H1 (cell line): ENCODE measurements at regions of chr22 and their contacts with region 1.

Region 1: DNA sequence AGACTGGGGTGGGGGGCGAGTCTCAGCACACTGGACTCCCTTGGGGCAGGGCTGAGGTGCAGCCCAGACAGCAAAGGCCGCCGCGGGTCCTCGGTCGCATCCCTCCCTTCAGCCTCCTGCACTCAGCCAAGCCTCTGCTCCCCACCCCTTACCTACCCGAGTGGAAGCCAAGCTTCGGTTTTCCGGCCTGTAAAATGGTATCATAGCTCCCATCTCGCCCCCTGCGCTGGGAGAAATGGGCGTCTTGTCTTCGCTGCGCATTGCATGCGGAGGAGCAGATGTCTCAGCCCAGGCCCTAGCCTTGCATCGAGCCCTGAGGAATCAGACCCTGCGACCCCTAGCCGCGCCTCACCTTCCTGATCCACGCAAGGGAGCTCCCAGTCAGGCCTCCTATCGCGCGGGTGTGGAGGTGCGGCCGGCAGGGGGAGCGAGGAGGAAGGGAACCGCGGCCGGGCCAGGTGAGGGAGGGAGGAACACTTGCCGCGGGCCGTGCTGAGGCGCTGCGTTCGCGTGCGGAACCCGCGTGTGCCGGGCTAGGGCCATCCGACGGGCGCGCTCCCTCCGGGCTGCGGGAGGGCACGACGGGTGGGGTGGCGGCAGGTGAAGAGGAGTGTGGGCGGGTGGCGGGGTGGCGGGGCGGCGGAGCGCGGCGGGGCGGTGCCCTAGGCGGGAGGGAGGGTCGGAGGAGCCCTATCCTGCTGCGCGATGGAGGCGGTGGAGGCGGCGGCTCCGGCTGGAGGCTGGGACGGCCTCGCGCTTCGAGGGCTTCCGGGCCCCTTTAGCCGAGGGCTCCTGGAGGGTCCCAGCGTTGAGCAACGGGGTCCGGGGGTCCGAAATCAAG is 4.1 kb upstream of the TBX1 start:
- DNase-seq: peak in 1 of 2 experiments; percentile 78
- H3K4me3 ChIP-seq: peak overlapping the region in 3 of 4 experiments; percentile 4 to 56 (median 10); a peak in 4 of 8 replicates
- H3K27ac ChIP-seq: no peak overlapping the region
- H3K4me1 ChIP-seq: peaks cover 0 to 38% (median 13%) of the 10 kb centered on the region in 4 experiments; a peak in 5 of 7 replicates
- H3K27me3 ChIP-seq: peaks cover 76 to 92% (median 85%) of the 10 kb centered on the region in 4 experiments
- CTCF ChIP-seq: peak in 2 of 3 experiments; percentile 38 to 39; a peak in 3 of 4 replicates
- EP300 ChIP-seq: no peak
- POLR2A ChIP-seq: no peak
- RAD21 ChIP-seq: peak; percentile 18 to 24; a peak in 2 of 4 replicates

Region 2: DNA sequence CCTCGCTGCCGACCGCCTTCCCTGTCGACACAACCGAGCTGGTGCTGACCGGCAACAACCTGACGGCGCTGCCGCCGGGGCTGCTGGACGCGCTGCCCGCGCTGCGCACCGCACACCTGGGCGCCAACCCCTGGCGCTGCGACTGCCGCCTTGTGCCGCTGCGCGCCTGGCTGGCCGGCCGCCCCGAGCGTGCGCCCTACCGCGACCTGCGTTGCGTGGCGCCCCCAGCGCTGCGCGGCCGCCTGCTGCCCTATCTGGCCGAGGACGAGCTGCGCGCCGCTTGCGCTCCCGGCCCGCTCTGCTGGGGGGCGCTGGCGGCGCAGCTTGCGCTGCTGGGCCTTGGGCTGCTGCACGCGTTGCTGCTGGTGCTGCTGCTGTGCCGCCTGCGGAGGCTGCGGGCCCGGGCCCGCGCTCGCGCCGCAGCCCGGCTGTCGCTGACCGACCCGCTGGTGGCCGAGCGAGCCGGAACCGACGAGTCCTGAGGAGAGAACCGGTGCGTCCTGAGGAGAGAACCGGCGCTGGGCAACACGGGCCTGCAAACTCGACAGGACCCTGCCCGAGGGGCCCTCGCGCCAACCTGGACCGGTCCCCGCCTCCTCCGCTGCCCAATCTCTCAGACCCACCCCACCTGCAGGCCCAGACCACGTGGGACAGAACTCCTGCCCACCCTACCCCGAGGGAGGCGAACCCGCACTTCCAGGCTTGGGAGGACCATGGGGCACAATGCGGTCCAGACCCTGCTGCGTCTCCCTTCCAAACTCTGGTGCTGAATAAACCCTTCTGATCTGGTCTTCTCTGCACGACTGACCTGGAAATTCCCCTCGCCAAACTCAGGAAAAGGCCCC is 32.3 kb before region 1 on chr22:
- CTCF ChIA-PET with region 1: interaction called, 168 read pairs
- POLR2A ChIA-PET with region 1: interaction called, 3 read pairs
- DNase-seq: peak in 1 of 2 experiments; percentile 79
- H3K4me3 ChIP-seq: peak overlapping the region in 3 of 4 experiments; percentile 25 to 55 (median 32); a peak in 5 of 8 replicates
- H3K27ac ChIP-seq: no peak overlapping the region
- H3K4me1 ChIP-seq: peaks cover 0 to 33% (median 20%) of the 10 kb centered on the region in 4 experiments; a peak in 6 of 7 replicates
- H3K27me3 ChIP-seq: peaks cover 80 to 100% (median 97%) of the 10 kb centered on the region in 4 experiments
- CTCF ChIP-seq: peak; percentile 59 to 89 (median 76)
- EP300 ChIP-seq: no peak
- POLR2A ChIP-seq: no peak
- RAD21 ChIP-seq: peak; percentile 47 to 77

Region 3: DNA sequence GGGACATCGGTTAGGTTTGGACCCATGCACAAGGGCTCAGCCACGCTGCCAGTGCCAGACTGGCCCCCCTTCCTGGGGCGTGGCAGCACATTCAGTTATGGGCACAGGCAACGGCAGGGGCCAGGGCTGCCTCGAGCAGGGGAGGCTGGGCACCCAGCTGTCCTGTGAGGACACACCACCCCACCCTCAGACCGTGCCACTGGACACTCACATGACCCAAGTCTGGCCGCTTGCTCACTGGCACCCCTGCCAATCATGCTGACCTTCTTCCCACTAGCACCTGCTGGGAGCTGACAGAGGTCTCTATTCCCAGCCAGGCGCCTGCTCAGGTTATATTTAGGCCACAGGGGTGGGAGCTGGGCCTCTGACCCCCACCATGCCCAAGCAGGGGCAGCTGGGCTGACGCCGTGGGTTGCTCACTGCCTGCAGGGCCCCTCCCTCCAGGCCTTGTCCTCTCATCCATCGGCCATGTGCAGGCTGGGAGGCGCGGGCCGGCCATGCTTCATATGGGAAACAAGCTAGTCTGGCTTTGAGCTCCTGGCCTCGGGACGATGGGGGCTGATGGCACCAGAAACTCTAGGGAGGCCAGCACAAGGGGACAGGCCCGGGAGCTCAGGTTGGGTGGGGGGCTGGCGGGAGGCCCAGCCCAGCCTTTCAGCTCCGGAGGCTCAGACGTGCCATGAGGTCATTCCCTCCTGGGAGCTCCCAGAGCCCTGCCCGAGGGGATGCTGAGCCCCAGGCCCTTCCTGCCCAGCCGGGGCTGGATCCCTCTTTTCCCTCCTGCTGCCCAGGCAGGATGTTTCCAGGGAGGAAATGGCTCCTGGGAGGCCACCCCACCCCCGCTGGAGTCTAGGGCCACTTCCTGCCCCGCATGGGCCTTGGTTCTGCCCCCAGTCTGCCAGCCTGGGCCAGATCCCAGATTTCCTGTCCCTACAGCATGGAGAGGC is 11.1 kb before region 1 on chr22:
- CTCF ChIA-PET with region 1: interaction called, 17 read pairs
- POLR2A ChIA-PET with region 1: interaction called, 4 read pairs
- DNase-seq: no peak
- H3K4me3 ChIP-seq: no peak overlapping the region
- H3K27ac ChIP-seq: no peak overlapping the region
- H3K4me1 ChIP-seq: peaks cover 0 to 10% (median under 1%) of the 10 kb centered on the region in 4 experiments; a peak in 2 of 7 replicates
- H3K27me3 ChIP-seq: peaks cover 0 to 2% (median 0%) of the 10 kb centered on the region in 4 experiments; a peak in 4 of 7 replicates
- CTCF ChIP-seq: no peak
- EP300 ChIP-seq: no peak
- POLR2A ChIP-seq: no peak
- RAD21 ChIP-seq: no peak

Region 4: DNA sequence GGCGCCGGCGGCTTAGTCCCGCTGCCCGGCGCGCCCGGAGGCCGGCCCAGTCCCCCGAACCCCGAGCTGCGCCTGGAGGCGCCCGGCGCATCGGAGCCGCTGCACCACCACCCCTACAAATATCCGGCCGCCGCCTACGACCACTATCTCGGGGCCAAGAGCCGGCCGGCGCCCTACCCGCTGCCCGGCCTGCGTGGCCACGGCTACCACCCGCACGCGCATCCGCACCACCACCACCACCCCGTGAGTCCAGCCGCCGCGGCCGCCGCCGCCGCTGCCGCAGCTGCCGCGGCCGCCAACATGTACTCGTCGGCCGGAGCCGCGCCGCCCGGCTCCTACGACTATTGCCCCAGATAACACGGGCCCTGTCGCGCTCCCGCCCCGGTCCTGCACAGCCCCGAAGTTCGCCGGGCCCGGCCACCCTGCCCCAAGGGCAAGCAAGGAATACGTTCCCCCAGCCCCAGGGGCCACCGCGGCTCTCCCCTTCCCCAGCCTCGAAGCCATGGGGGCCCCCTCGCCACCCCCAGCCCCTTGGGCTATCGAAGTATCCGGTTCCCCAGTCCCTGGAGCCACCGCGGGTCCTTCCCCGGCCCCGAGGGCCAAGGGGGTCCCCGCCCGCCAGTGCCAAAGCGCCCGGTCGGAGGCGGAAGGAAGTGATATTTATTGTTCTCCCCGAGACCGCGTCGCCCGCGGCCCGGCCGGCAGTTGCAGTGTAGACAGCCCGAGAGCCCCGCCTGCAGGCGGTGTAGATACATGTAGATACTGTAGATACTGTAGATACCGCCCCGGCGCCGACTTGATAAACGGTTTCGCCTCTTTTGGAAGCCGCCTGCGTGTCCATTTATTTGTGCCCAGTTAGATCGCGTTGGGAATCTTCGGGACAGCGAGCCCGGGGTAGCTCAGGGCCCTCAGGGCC is 10.3 kb after region 1 on chr22:
- CTCF ChIA-PET with region 1: interaction called, 42 read pairs
- POLR2A ChIA-PET with region 1: interaction called, 21 read pairs
- DNase-seq: peak in 1 of 2 experiments; percentile 87
- H3K4me3 ChIP-seq: peak overlapping the region in 2 of 4 experiments; percentile 6 to 44; a peak in 3 of 8 replicates
- H3K27ac ChIP-seq: no peak overlapping the region
- H3K4me1 ChIP-seq: peaks cover 0 to 45% (median 32%) of the 10 kb centered on the region in 4 experiments; a peak in 6 of 7 replicates
- H3K27me3 ChIP-seq: peaks cover 79 to 95% (median 93%) of the 10 kb centered on the region in 4 experiments
- CTCF ChIP-seq: peak; percentile 29 to 52 (median 39)
- EP300 ChIP-seq: no peak
- POLR2A ChIP-seq: no peak
- RAD21 ChIP-seq: peak; percentile 46 to 49